ENCODE measurements at regions of chr12 and their contacts with region 1.

Region 1: DNA sequence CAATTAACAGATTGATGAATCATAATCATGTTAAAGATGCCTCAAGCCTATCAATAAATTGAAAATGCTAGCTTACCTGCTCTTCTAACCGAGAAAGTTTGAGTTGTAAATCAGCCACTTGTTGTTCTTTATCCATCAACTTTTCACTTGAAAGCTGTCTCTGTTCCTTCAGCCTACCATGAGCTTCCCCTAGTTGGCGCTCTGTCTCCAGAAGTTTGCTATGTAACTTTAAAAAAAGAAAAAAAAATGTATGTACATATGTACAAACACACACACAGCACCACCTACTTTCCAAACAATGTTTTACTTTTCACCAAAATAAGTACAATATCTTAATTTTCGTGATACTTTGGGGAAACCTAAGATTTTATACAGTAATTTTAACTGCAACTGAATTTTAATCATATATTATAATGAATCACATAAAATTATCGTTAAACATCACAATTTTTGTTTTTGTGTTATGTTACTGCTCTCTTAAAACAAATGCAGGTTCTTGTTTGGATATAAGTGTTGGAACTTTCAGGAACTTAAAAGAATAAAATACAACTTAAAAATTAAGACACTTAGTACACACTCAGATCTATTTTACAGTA is 101.2 kb downstream of the EEA1 start:
- DNase-seq: peak; percentile 49
- ATAC-seq: 0 out of 2 replicates have a peak, but pooled peaks have one; percentile 37
- H3K4me3 ChIP-seq: no peak overlapping the region
- H3K27ac ChIP-seq: no peak overlapping the region
- H3K4me1 ChIP-seq: no peaks in the 10 kb centered on the region
- H3K27me3 ChIP-seq: no peaks in the 10 kb centered on the region
- CTCF ChIP-seq: peak; percentile 70
- POLR2A ChIP-seq: no peak
- RAD21 ChIP-seq: peak; percentile 64

Region 2: DNA sequence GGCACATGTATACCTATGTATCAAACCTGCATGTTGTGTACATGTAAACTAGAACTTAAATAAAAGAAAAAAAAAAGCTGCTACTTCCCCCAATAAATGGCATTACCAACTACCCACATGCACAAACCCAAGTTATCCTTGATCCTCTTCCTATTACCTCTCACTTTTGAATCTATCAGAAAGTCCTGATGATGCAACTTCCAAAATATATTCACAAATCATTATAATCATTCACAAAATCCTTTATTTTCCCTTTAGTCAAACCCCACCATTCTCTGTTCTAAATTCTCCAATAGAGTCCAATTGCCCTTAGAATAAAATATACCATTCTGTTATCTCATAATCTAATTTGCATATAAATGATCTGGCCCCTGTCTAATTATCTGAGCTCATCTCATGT is 33.1 kb before region 1 on chr12:
- CTCF ChIA-PET with region 1: no interaction called
- POLR2A ChIA-PET with region 1: no interaction called
- dilution Hi-C with region 1: no loop called
- in situ Hi-C with region 1: no loop called
- intact Hi-C with region 1: no loop called
- DNase-seq: no peak
- ATAC-seq: no peak
- H3K4me3 ChIP-seq: no peak overlapping the region
- H3K27ac ChIP-seq: no peak overlapping the region
- H3K4me1 ChIP-seq: no peaks in the 10 kb centered on the region
- H3K27me3 ChIP-seq: no peaks in the 10 kb centered on the region
- CTCF ChIP-seq: no peak
- POLR2A ChIP-seq: no peak
- RAD21 ChIP-seq: no peak

Region 3: DNA sequence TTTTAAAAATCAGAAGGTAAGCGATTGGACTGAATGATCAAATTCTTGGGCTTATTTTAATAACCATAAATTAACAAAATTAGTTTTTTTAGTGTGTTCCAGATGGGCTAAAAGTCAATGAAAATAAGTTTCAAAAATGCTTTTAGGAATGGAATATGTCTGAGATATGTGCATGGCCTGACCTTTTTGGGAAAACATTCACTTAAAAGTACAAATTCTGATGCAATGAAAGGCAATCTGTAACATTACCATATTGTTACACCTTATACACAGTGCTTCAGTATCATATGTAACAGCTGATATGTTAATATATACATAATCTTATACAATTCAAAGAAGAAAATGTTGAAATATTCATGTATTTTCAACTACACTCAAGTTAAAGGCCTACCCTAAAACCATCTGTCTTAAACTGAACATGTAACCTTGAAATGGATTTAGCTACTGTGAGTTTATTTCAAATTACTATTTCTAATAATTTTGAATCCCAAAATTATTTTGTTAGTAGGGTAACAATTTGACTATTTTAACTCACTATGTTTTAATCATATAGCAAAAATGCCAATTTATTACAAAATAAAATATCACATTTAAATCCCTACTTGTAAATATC is 16.3 kb after region 1 on chr12:
- CTCF ChIA-PET with region 1: interaction called, 3 read pairs
- POLR2A ChIA-PET with region 1: no interaction called
- dilution Hi-C with region 1: no loop called
- in situ Hi-C with region 1: no loop called
- intact Hi-C with region 1: loop called (anchors 1 kb)
- DNase-seq: peak; percentile 3
- ATAC-seq: no peak
- H3K4me3 ChIP-seq: no peak overlapping the region
- H3K27ac ChIP-seq: no peak overlapping the region
- H3K4me1 ChIP-seq: no peaks in the 10 kb centered on the region
- H3K27me3 ChIP-seq: no peaks in the 10 kb centered on the region
- CTCF ChIP-seq: no peak
- POLR2A ChIP-seq: no peak
- RAD21 ChIP-seq: no peak